B cell (primary cell): ENCODE measurements at regions of chr20 and their contacts with region 1.

Region 1: GRCh38 chr20:17682103-17682888 is at the start of gene RRBP1:
- DNase-seq: peak; percentile 97
- ATAC-seq: peak; percentile 92
- H3K4me3 ChIP-seq: peak within 1 kb of the TSS; percentile 51 to 85 (median 72)
- H3K4me3 Mint-ChIP-seq: peak within 1 kb of the TSS; percentile 92
- H3K27ac ChIP-seq: peak within 1 kb of the TSS; percentile 46 to 74
- H3K27ac Mint-ChIP-seq: peak within 1 kb of the TSS; percentile 92
- H3K4me1 ChIP-seq: peaks cover 15 to 18% of the 10 kb centered on the region in 2 donors
- H3K4me1 Mint-ChIP-seq: peaks cover 20% of the 10 kb centered on the region
- H3K27me3 ChIP-seq: peaks cover 0 to 11% (median 4%) of the 10 kb centered on the region in 4 experiments
- H3K27me3 Mint-ChIP-seq: peaks cover 29% of the 10 kb centered on the region
- CTCF ChIP-seq: peak; percentile 90
- total RNA-seq, gene RRBP1: 27.5 and 29.1 TPM in 2 replicates

Region 2: DNA sequence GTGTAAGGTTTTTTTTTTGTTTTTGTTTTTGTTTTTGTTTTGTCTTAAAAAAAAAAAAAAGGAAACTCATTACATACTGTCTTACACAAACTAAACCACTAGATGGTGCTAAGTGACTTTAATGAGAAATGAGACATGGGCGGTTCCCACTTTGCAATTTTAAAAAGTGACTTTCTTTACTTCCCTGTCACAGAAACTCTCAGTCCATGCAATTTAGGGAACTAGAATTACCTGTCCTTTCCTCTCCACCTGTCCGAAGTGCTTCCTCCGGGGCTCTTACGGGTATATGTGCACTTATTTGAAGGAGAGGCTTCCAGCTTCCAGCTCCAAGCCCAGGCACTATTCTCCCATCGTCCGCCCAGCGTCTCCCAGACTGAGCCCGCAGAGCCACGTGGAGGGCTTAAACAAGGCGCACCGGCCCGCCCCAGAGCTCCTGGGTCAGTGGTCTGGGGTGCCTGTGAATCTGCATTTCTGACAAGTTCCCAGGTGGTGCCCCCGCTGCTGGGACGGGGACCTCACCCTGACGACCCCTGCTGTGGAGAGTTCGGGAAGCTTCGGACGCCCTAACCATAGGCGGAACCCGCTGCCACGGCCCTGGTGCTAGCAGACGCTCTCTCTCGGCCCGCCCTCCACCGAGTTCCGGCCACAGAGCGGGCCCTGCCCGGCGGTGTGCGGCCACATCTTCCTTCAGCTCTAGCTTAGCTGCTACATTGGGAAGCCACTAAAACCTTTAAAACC is 177.2 kb before region 1 on chr20:
- CTCF ChIA-PET with region 1: interaction called, 12 read pairs
- POLR2A ChIA-PET with region 1: no interaction called
- intact Hi-C with region 1: no loop called
- DNase-seq: peak; percentile 83
- ATAC-seq: peak; percentile 84
- H3K4me3 ChIP-seq: peak overlapping the region; percentile 47 to 81 (median 59)
- H3K4me3 Mint-ChIP-seq: peak overlapping the region; percentile 94
- H3K27ac ChIP-seq: peak overlapping the region; percentile 20 to 51
- H3K27ac Mint-ChIP-seq: peak overlapping the region; percentile 60
- H3K4me1 ChIP-seq: peaks cover 9 to 17% of the 10 kb centered on the region in 2 donors
- H3K4me1 Mint-ChIP-seq: peaks cover 13% of the 10 kb centered on the region
- H3K27me3 ChIP-seq: no peaks in the 10 kb centered on the region
- H3K27me3 Mint-ChIP-seq: peaks cover 7% of the 10 kb centered on the region
- CTCF ChIP-seq: peak; percentile 80

Region 3: DNA sequence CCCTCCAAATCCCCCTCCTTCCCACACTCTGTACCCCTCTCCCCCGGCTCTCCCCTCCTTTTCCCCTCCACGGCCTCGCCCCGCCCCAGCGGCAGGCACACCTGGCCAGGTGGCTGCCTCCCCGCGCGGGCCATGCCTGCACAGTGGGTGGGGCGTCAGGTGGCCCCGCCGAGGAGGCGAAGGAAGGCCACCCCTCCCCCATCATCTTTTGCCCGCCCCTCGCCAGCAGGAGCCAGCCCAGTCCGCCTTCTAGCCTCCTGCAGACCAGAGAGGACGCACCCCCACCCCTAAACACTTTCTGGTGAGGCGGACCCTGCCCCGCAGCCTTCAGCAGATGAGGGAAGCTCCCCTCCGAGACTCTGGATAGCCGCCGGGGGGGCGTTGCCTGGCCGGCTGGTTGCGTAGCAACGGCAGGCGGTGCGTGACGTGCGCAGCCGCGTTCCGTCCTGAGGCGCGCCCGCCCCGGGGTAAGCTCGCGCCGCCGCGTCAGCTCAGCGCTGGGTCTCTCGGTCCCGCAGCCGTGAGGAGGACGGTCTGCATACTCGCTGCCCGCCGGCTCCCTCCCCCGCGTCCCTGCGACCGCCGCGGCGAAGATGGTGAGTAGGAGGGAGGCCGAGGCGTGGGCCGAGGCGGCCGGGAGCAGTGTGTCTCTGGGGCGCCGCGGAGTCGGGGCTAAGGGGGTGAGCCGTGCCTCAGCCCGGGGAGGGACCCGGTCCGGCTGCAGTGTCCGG is 112.5 kb before region 1 on chr20 and contains the start of gene DSTN:
- CTCF ChIA-PET with region 1: interaction called, 15 read pairs
- POLR2A ChIA-PET with region 1: interaction called, 4 read pairs
- intact Hi-C with region 1: loop called (anchors 1 kb)
- DNase-seq: peak; percentile 93
- ATAC-seq: peak; percentile 91
- H3K4me3 ChIP-seq: peak within 1 kb of the TSS; percentile 77 to 97 (median 83)
- H3K4me3 Mint-ChIP-seq: peak within 1 kb of the TSS; percentile 94
- H3K27ac ChIP-seq: peak within 1 kb of the TSS in 1 of 2 donors; percentile 72
- H3K27ac Mint-ChIP-seq: peak within 1 kb of the TSS; percentile 89
- H3K4me1 ChIP-seq: peaks cover 11 to 14% of the 10 kb centered on the region in 2 donors
- H3K4me1 Mint-ChIP-seq: peaks cover 20% of the 10 kb centered on the region
- H3K27me3 ChIP-seq: peaks cover 0 to 12% (median 2%) of the 10 kb centered on the region in 4 experiments
- H3K27me3 Mint-ChIP-seq: peaks cover 8% of the 10 kb centered on the region
- CTCF ChIP-seq: no peak
- total RNA-seq, gene DSTN: 12.9 and 13.4 TPM in 2 replicates

Region 4: GRCh38 chr20:17742401-17743130 is 60.3 kb after region 1 on chr20:
- CTCF ChIA-PET with region 1: no interaction called
- POLR2A ChIA-PET with region 1: no interaction called
- intact Hi-C with region 1: no loop called
- DNase-seq: no peak
- ATAC-seq: no peak
- H3K4me3 ChIP-seq: no peak overlapping the region
- H3K4me3 Mint-ChIP-seq: no peak overlapping the region
- H3K27ac ChIP-seq: no peak overlapping the region
- H3K27ac Mint-ChIP-seq: no peak overlapping the region
- H3K4me1 ChIP-seq: no peaks in the 10 kb centered on the region
- H3K4me1 Mint-ChIP-seq: no peaks in the 10 kb centered on the region
- H3K27me3 ChIP-seq: peaks cover 0 to 2% (median 0%) of the 10 kb centered on the region in 4 experiments
- H3K27me3 Mint-ChIP-seq: peaks cover 15% of the 10 kb centered on the region
- CTCF ChIP-seq: no peak

Region 5: GRCh38 chr20:17878912-17879602 is 196.8 kb after region 1 on chr20:
- CTCF ChIA-PET with region 1: interaction called, 4 read pairs
- POLR2A ChIA-PET with region 1: no interaction called
- intact Hi-C with region 1: loop called (anchors 1 kb)
- DNase-seq: peak; percentile 69
- ATAC-seq: peak; percentile 74
- H3K4me3 ChIP-seq: peak overlapping the region in 2 of 5 experiments; percentile 9 to 12
- H3K4me3 Mint-ChIP-seq: peak overlapping the region; percentile 71
- H3K27ac ChIP-seq: peak overlapping the region; percentile 64 to 71
- H3K27ac Mint-ChIP-seq: peak overlapping the region; percentile 82
- H3K4me1 ChIP-seq: peaks cover 58 to 65% of the 10 kb centered on the region in 2 donors
- H3K4me1 Mint-ChIP-seq: peaks cover 56% of the 10 kb centered on the region
- H3K27me3 ChIP-seq: no peaks in the 10 kb centered on the region
- H3K27me3 Mint-ChIP-seq: no peaks in the 10 kb centered on the region
- CTCF ChIP-seq: peak; percentile 65

Region 6: DNA sequence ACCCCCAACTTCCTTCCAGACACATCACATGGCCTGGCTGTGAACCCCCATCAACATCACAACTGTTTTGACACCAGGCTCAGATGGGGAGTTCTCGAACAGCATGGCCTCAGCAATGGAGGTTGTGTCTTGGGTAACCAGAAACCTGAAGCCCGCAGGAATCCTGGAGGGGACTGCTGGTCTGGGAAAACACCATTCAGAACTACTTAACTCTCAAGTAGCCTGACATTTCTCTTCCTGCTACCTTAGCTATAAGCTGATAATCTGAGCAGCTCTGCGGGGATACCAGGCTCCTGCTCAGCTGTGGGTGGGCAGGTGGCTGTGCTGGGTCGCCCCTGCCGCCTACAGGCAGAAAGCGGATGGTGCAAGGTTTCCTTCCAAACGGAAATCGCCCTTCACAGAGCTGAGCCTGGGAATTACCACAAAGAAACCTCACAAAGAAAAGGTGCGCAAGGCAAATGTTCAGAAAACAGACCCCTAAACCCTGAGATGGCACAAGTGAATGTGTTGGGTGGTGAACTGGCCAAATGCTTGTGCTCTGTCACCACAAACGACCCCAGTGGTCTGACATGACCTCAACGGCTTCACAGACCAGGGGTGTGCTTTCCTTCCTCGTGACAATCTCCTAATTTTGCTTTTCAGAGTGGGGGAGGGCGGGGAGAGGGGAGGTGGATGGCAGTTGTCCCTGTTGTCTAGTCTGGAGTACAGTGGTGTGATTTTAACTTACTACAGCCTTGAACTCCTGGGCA is 256.7 kb after region 1 on chr20:
- CTCF ChIA-PET with region 1: interaction called, 32 read pairs
- POLR2A ChIA-PET with region 1: no interaction called
- intact Hi-C with region 1: loop called (anchors 1 kb)
- DNase-seq: peak; percentile 79
- ATAC-seq: peak; percentile 89
- H3K4me3 ChIP-seq: no peak overlapping the region
- H3K4me3 Mint-ChIP-seq: peak overlapping the region; percentile 54
- H3K27ac ChIP-seq: peak overlapping the region in 1 of 2 donors; percentile 55
- H3K27ac Mint-ChIP-seq: peak overlapping the region; percentile 56
- H3K4me1 ChIP-seq: peaks cover 24 to 26% of the 10 kb centered on the region in 2 donors
- H3K4me1 Mint-ChIP-seq: peaks cover 36% of the 10 kb centered on the region
- H3K27me3 ChIP-seq: no peaks in the 10 kb centered on the region
- H3K27me3 Mint-ChIP-seq: no peaks in the 10 kb centered on the region
- CTCF ChIP-seq: peak; percentile 88

Region 7: DNA sequence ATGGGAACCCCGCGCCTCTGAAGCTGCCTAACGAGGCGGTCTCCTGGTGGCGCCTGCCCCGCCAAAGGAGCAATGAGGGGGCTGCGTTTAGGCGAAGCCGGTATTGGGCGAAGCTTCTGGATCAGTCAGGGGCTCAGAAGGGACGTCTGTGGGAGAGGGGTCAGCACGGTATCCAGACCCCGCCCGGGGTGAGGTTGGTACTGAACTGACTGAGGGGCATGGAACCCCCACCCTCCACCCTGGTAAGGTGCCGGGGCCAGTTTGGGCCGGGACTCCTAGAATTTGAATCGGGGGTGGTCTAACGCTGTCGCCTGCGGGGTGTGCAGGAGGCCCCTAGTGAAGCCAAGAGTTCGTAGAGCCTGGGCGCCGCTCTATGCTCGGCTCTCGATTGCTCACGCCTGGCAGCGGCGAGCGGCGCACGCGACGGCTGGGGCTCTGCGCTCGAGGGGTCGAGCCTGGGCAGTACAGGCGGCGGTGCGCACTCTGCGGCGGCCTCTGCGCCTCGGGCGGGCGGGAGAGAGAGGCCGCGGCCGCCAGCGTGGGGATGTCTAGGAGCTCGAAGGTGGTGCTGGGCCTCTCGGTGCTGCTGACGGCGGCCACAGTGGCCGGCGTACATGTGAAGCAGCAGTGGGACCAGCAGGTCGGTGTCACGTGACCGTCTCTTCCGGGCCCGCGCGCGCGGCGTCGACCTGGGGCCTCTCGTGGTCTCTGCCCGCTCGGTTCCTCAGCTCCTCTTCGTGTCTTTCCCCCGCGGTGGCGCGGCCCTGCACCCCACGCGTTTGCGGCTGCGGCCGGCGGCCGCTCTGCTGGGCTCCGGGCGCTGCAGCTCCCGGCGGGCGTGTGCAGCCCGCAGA is 455.3 kb after region 1 on chr20 and contains the starts of genes KAT14 and PET117:
- CTCF ChIA-PET with region 1: interaction called, 7 read pairs
- POLR2A ChIA-PET with region 1: no interaction called
- intact Hi-C with region 1: loop called (anchors 1 kb)
- DNase-seq: peak; percentile 97
- ATAC-seq: peak; percentile 88
- H3K4me3 ChIP-seq: peak within 1 kb of the TSS; percentile 48 to 93 (median 85)
- H3K4me3 Mint-ChIP-seq: peak within 1 kb of the TSS; percentile 92
- H3K27ac ChIP-seq: peak within 1 kb of the TSS; percentile 65 to 77
- H3K27ac Mint-ChIP-seq: peak within 1 kb of the TSS; percentile 95
- H3K4me1 ChIP-seq: peaks cover 15 to 25% of the 10 kb centered on the region in 2 donors
- H3K4me1 Mint-ChIP-seq: peaks cover 27% of the 10 kb centered on the region
- H3K27me3 ChIP-seq: peaks cover 0 to 4% (median 0%) of the 10 kb centered on the region in 4 experiments
- H3K27me3 Mint-ChIP-seq: no peaks in the 10 kb centered on the region
- CTCF ChIP-seq: no peak
- total RNA-seq, gene KAT14: 15.1 and 15.5 TPM in 2 replicates
- total RNA-seq, gene PET117: 10.7 and 13.0 TPM in 2 replicates

Region 8: GRCh38 chr20:18566892-18567742 is 884.8 kb after region 1 on chr20 and contains the start of gene SMIM26:
- CTCF ChIA-PET with region 1: no interaction called
- POLR2A ChIA-PET with region 1: no interaction called
- intact Hi-C with region 1: loop called (anchors 5 kb)
- DNase-seq: peak; percentile 95
- ATAC-seq: peak; percentile 98
- H3K4me3 ChIP-seq: peak within 1 kb of the TSS; percentile 67 to 88 (median 80)
- H3K4me3 Mint-ChIP-seq: peak within 1 kb of the TSS; percentile 99
- H3K27ac ChIP-seq: peak within 1 kb of the TSS; percentile 84 to 91
- H3K27ac Mint-ChIP-seq: peak within 1 kb of the TSS; percentile 97
- H3K4me1 ChIP-seq: peaks cover 12 to 13% of the 10 kb centered on the region in 2 donors
- H3K4me1 Mint-ChIP-seq: peaks cover 18% of the 10 kb centered on the region
- H3K27me3 ChIP-seq: no peaks in the 10 kb centered on the region
- H3K27me3 Mint-ChIP-seq: no peaks in the 10 kb centered on the region
- CTCF ChIP-seq: no peak
- total RNA-seq, gene SMIM26: 47.4 and 47.7 TPM in 2 replicates